ENCODE measurements at regions of chrX and their contacts with region 1.

Region 1: GRCh38 chrX:50618788-50619558 is 148.3 kb upstream of the DGKK start:
- DNase-seq: peak; percentile 57
- H3K4me3 ChIP-seq: no peak overlapping the region
- H3K27ac ChIP-seq: peak overlapping the region; percentile 90
- H3K4me1 ChIP-seq: peaks cover 17% of the 10 kb centered on the region
- H3K27me3 ChIP-seq: no peaks in the 10 kb centered on the region
- CTCF ChIP-seq: peak; percentile 42; the same call in 1 of the 2 replicates

Region 2: DNA sequence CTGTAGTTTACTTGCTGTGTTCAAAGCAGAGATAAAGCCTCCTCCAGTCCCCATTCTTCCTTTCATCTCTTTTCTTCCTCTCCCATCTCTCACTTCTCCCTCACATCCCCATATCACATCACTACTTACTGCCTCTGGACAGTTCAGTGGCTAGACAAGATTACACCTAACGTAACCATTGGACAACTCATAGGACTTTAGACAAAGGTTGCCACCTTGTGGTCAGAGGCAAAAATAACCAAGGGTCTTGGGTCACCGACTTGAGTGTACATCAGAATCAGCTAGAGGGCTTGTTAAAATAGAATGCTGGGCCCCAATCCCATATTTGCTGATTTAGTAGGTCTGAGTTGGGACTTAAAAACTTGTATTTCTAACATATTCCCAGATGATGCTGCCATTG is 39.0 kb before region 1 on chrX:
- CTCF ChIA-PET with region 1: interaction called, 21 read pairs
- POLR2A ChIA-PET with region 1: no interaction called
- intact Hi-C with region 1: no loop called
- DNase-seq: peak; percentile 80
- H3K4me3 ChIP-seq: no peak overlapping the region
- H3K27ac ChIP-seq: no peak overlapping the region
- H3K4me1 ChIP-seq: no peaks in the 10 kb centered on the region
- H3K27me3 ChIP-seq: no peaks in the 10 kb centered on the region
- CTCF ChIP-seq: peak; percentile 75

Region 3: DNA sequence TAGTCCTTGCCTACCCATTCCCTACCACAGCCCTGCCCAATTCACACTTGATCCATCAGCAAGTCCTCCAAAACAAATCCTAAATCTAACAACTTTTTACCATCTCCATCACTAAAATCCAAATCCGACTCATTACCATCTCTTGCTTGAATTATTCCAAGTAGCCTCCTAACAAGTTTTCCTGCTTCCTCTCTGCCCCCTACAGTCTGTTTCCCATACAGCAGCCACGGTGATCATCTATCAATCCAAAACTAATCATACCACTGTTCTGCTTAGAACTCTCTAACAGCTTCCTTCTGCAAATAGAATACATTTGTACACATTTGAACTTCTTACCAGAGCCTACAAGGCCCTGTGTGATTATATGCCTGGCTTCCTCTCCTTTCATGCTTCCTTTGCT is 62.0 kb after region 1 on chrX:
- CTCF ChIA-PET with region 1: interaction called, 6 read pairs
- POLR2A ChIA-PET with region 1: interaction called, 3 read pairs
- intact Hi-C with region 1: loop called (anchors 2 kb)
- DNase-seq: peak; percentile 68
- H3K4me3 ChIP-seq: no peak overlapping the region
- H3K27ac ChIP-seq: peak overlapping the region; percentile 64
- H3K4me1 ChIP-seq: peaks cover 21% of the 10 kb centered on the region
- H3K27me3 ChIP-seq: peaks cover under 1% of the 10 kb centered on the region
- CTCF ChIP-seq: peak; percentile 71

Measured in A673 (cell line).